Thyroid gland (tissue), 4 donors: ENCODE measurements at regions of chr14 and their contacts with region 1.

Region 1: DNA sequence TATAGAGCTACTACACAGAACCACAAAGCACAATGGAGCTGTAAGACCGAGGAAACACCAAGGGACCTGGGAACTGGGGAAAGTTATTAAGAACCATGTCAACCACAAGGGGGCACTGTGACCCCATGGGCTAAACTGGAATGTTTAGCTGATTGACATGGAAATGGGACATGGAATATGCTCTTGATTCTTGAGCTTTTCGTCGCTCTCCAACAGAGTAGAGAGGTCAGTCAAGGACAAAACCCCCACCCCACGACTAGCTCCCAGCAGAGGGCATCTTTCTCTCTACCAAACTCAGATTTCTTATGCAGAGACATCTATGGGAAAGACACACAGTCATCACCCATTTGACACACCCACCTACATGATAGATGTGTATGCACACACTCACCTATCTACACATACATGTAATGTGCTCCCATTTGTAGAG is 10.1 kb downstream of the NDRG2 start:
- DNase-seq: peak; percentile 84 to 91
- H3K4me3 ChIP-seq: no peak overlapping the region
- H3K27ac ChIP-seq: no peak overlapping the region
- H3K4me1 ChIP-seq: no peaks in the 10 kb centered on the region
- H3K27me3 ChIP-seq: no peaks in the 10 kb centered on the region
- CTCF ChIP-seq: peak; percentile 91 to 97 (median 95)
- POLR2A ChIP-seq: no peak

Region 2: DNA sequence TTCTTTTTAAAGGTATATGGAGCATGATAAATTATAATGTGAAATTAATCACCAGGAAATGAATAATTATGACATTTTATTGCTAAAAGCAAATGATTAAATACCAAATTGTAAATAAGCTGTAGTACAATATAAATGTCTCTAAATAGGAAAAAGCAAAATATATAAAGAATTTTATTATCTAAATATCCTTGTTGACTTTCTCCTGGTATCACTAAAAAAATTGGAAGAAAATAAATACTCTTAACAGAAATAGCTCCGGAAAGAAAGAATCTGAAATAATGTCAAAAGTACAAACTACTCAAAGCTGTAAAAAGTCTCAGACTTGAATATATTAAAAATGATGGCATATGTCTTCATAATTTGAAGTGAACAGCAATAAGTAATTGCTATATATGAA is 786.1 kb before region 1 on chr14 and contains the start of gene OR11H7:
- intact Hi-C with region 1: no loop called
- DNase-seq: no peak
- H3K4me3 ChIP-seq: no peak within 1 kb of the TSS
- H3K27ac ChIP-seq: no peak within 1 kb of the TSS
- H3K4me1 ChIP-seq: no peaks in the 10 kb centered on the region
- H3K27me3 ChIP-seq: no peaks in the 10 kb centered on the region
- CTCF ChIP-seq: no peak
- POLR2A ChIP-seq: no peak
- total RNA-seq, gene OR11H7: not detected

Region 3: GRCh38 chr14:20873370-20874177 is 141.2 kb before region 1 on chr14:
- intact Hi-C with region 1: no loop called
- DNase-seq: peak; percentile 68 to 73
- H3K4me3 ChIP-seq: no peak overlapping the region
- H3K27ac ChIP-seq: no peak overlapping the region
- H3K4me1 ChIP-seq: no peaks in the 10 kb centered on the region
- H3K27me3 ChIP-seq: no peaks in the 10 kb centered on the region
- CTCF ChIP-seq: peak in 5 of 6 experiments; percentile 33 to 81 (median 48)
- POLR2A ChIP-seq: no peak

Region 4: GRCh38 chr14:21039585-21040369 is 25.0 kb after region 1 on chr14:
- intact Hi-C with region 1: loop called (anchors 2 kb)
- DNase-seq: peak; percentile 43 to 56
- H3K4me3 ChIP-seq: no peak overlapping the region
- H3K27ac ChIP-seq: peak overlapping the region; percentile 63 to 81 (median 75)
- H3K4me1 ChIP-seq: peaks cover 28 to 40% of the 10 kb centered on the region in 2 donors
- H3K27me3 ChIP-seq: no peaks in the 10 kb centered on the region
- CTCF ChIP-seq: peak; percentile 38 to 73 (median 62)
- POLR2A ChIP-seq: no peak

Region 5: GRCh38 chr14:21572604-21573003 is 557.8 kb after region 1 on chr14:
- intact Hi-C with region 1: no loop called
- DNase-seq: no peak
- H3K4me3 ChIP-seq: no peak overlapping the region
- H3K27ac ChIP-seq: no peak overlapping the region
- H3K4me1 ChIP-seq: no peaks in the 10 kb centered on the region
- H3K27me3 ChIP-seq: no peaks in the 10 kb centered on the region
- CTCF ChIP-seq: no peak
- POLR2A ChIP-seq: no peak